IMR-90 (cell line): ENCODE measurements at regions of chr16 and their contacts with region 1.

Region 1: DNA sequence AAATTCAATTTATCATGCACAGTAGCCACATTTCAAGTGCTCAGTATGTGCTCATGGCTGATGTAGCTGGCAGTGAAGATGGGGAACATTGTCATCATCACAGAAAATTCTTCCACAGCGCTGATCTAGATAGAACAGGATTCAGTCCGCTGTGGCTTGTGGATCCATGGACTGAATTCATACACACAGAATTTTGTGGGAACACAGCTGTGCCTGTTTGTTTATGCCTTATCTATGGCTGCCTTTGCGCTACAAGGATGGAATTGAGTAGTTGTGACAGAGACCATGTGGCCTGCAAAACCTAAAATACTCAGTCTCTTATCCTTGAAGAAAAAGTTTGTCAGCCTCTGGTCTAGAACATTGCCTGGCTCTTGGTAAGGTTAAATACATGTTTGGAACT is 128.4 kb downstream of the PRKCB start:
- DNase-seq: no peak
- ATAC-seq: no peak
- H3K4me3 ChIP-seq: no peak overlapping the region
- H3K27ac ChIP-seq: no peak overlapping the region
- H3K4me1 ChIP-seq: no peaks in the 10 kb centered on the region
- H3K27me3 ChIP-seq: no peaks in the 10 kb centered on the region
- CTCF ChIP-seq: no peak
- POLR2A ChIP-seq: no peak
- RAD21 ChIP-seq: no peak

Region 2: GRCh38 chr16:23999663-24000062 is 35.5 kb after region 1 on chr16:
- CTCF ChIA-PET with region 1: no interaction called
- POLR2A ChIA-PET with region 1: interaction called, 13 read pairs
- dilution Hi-C with region 1: no loop called
- in situ Hi-C with region 1: no loop called
- intact Hi-C with region 1: no loop called
- DNase-seq: no peak
- ATAC-seq: no peak
- H3K4me3 ChIP-seq: no peak overlapping the region
- H3K27ac ChIP-seq: no peak overlapping the region
- H3K4me1 ChIP-seq: no peaks in the 10 kb centered on the region
- H3K27me3 ChIP-seq: no peaks in the 10 kb centered on the region
- CTCF ChIP-seq: no peak
- POLR2A ChIP-seq: no peak
- RAD21 ChIP-seq: no peak

Region 3: GRCh38 chr16:24151482-24151939 is 187.4 kb after region 1 on chr16:
- CTCF ChIA-PET with region 1: no interaction called
- POLR2A ChIA-PET with region 1: no interaction called
- dilution Hi-C with region 1: no loop called
- in situ Hi-C with region 1: no loop called
- intact Hi-C with region 1: no loop called
- DNase-seq: peak; percentile 0
- ATAC-seq: no peak
- H3K4me3 ChIP-seq: no peak overlapping the region
- H3K27ac ChIP-seq: no peak overlapping the region
- H3K4me1 ChIP-seq: no peaks in the 10 kb centered on the region
- H3K27me3 ChIP-seq: no peaks in the 10 kb centered on the region
- CTCF ChIP-seq: no peak
- POLR2A ChIP-seq: no peak
- RAD21 ChIP-seq: no peak